Adrenal gland (tissue), 19 donors: ENCODE measurements at regions of chr19 and their contacts with region 1.

Region 1: DNA sequence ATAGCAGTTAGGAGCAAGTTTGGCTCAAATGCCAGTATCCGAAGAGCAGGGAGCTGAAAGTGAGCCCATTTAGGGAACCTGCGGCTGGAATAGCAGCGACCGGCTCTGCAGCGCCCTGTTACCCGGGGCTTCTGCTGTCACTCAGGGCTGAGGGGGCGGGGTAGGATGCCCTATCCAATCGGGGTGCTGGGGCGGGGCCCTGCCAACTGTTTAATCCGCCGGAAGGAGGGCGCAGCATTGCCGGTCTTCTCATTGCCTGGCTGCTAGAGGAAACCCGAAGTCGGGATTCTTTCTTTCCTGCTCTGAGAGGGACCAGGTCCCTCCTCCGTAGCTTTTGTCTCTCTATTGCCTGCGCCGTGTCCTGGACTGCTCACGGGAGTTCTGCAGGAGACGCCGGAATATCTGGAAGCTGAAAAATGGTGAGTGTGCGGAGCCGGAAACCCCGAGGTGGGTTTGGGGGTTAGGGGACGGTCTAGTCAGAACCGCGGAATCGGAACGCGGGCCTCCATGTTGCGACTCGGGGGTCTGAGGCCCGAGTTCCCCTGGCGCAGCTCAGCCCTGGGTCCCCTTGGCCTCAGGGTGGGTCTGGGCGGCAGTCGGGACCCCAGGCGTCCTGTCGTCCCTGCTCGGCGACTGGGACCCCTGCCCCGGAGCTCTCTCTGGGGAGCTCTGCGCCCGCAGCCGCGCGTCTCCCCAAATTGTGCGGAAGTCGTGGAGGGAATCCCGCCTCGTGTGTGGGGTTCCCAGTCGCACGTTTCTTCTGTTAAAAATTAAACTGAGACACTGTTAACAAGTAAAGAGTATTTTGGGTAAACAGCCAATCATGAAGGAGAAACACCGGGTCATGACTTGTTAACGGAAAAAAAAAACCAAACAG is 22.8 kb downstream of the ZNF763 start:
- DNase-seq: peak; percentile 94 to 99 (median 98)
- H3K4me3 ChIP-seq: peak overlapping the region; percentile 5 to 84 (median 73)
- H3K27ac ChIP-seq: peak overlapping the region; percentile 34 to 89 (median 78)
- H3K4me1 ChIP-seq: peaks cover 0 to 3% of the 10 kb centered on the region in 2 donors
- H3K27me3 ChIP-seq: no peaks in the 10 kb centered on the region
- CTCF ChIP-seq: no peak
- POLR2A ChIP-seq: peak; percentile 80 to 93

Region 2: DNA sequence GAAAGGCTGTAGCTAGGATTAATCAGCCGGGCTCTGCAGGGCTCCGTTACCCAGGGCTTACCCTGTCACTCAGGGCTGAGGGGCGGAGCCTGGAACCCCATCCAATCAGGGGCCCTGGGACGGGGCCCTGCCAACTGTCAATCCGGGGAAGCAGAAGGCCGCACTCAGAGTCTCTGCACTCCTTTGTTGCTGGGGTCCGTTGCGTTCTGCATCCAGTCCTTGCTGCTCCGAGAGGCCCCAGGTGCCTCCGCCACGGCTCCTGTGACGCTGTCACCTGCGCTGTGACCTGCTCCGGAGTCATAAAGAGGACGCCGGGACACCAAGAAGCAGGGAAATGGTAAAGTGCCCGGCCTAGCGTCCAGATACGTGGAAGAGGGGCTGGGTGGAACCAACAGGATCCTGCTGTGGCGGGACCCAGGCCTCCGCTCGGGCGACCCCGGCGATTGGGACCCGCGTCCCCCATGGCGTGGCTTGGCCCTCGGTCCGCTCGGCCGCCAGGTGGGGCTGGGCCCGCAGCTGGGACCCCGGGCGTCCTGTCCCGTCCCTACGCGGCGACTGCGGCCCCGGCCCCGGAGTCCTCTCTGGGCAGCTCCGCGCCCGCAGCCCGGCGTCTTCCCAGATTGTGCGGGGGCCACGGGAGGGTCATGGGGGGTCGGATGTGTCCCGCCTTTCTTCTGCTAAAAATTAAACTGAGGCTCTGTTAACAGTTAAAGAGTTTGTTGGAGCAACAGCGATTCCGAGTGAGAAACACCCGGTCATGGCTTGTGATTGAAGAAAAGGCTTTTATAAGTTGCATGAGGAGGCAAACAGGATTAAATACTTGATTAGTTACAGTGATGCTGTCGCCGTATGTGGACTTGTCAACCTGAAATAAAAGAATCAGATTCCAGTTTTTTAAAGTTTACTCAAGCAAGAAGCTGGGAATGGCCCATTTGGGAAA is 189.0 kb before region 1 on chr19 and contains the start of gene ZNF491:
- intact Hi-C with region 1: loop called in 1 of 2 experiments (anchors 10 kb)
- DNase-seq: peak; percentile 94 to 97 (median 96)
- H3K4me3 ChIP-seq: peak within 1 kb of the TSS in 3 of 4 donors; percentile 45 to 80 (median 71)
- H3K27ac ChIP-seq: peak within 1 kb of the TSS in 4 of 5 donors; percentile 72 to 87 (median 82)
- H3K4me1 ChIP-seq: peaks cover 9 to 17% of the 10 kb centered on the region in 2 donors
- H3K27me3 ChIP-seq: no peaks in the 10 kb centered on the region
- CTCF ChIP-seq: peak in 2 of 6 experiments; percentile 11 to 13
- POLR2A ChIP-seq: peak; percentile 33 to 93
- total RNA-seq, gene ZNF491: 0.24 to 7.2 (median 3.7) TPM

Region 3: GRCh38 chr19:11881151-11881800 is 106.4 kb before region 1 on chr19:
- intact Hi-C with region 1: loop called (anchors 5 to 10 kb)
- DNase-seq: peak; percentile 51 to 79 (median 66)
- H3K4me3 ChIP-seq: no peak overlapping the region
- H3K27ac ChIP-seq: no peak overlapping the region
- H3K4me1 ChIP-seq: no peaks in the 10 kb centered on the region
- H3K27me3 ChIP-seq: no peaks in the 10 kb centered on the region
- CTCF ChIP-seq: peak; percentile 56 to 84 (median 76)
- POLR2A ChIP-seq: no peak

Region 4: DNA sequence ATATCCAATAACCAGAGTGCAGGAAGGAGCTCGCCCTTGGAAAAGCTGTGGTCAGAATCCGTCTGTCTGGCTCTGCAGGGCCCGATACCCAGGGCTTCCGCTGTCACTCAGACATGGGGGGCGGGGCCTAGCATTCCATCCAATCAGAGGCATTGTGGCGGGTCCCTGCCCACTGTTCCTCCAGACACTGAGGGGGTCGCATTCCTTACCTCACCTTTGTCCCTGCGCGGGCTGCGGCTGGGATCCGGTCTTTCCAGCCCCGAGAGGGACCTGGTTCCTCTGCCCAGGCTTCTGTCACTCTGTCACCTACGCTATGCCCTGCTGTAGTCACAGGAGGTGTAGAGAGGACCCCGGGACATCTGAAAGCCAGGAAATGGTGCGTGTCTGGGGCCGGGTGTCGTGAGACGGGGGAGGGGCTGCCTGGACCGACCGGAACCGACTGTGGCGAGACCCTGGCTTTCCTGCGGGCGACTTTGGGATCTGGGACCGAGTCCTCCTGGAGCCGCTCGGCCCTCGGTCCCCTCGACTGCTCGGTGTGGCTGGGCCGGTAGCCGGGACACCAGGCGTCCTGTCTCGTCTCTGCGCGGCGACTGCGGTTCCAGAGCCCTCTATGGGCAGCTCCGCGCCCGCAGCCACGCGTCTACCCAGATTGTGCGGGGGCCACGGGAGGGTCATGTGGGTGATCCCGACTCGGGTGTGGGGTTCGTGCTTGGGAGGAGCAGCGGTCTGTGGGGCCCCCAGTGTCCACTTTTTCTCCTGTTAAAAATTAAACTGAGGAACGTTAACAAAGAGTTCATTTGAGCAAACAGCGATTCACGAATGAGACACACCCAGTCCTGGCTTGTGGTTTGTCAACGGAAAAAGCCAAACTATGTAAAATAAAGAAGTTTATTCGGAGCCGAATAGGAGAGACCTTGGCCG is 99.8 kb before region 1 on chr19 and contains the start of gene ZNF69:
- intact Hi-C with region 1: loop called (anchors 5 to 10 kb)
- DNase-seq: peak; percentile 81 to 94 (median 90)
- H3K4me3 ChIP-seq: peak within 1 kb of the TSS; percentile 69 to 86 (median 74)
- H3K27ac ChIP-seq: peak within 1 kb of the TSS; percentile 80 to 92 (median 86)
- H3K4me1 ChIP-seq: peaks cover 3 to 9% of the 10 kb centered on the region in 2 donors
- H3K27me3 ChIP-seq: no peaks in the 10 kb centered on the region
- CTCF ChIP-seq: peak in 4 of 6 experiments; percentile 21 to 34 (median 24)
- POLR2A ChIP-seq: peak; percentile 15 to 50
- total RNA-seq, gene ZNF69: 5.5 to 138 (median 12.9) TPM

Region 5: GRCh38 chr19:11924886-11925650 is 62.6 kb before region 1 on chr19 and contains the start of gene ZNF700:
- intact Hi-C with region 1: loop called in 1 of 2 experiments (anchors 5 kb)
- DNase-seq: peak; percentile 95 to 99 (median 97)
- H3K4me3 ChIP-seq: peak within 1 kb of the TSS in 3 of 4 donors; percentile 30 to 83 (median 77)
- H3K27ac ChIP-seq: peak within 1 kb of the TSS; percentile 79 to 96 (median 87)
- H3K4me1 ChIP-seq: peaks cover 26 to 34% of the 10 kb centered on the region in 2 donors
- H3K27me3 ChIP-seq: no peaks in the 10 kb centered on the region
- CTCF ChIP-seq: no peak
- POLR2A ChIP-seq: peak; percentile 13 to 89
- total RNA-seq, gene ZNF700: 5.5 to 19.7 (median 11.7) TPM